ENCODE measurements at regions of chr1 and their contacts with region 1.

Region 1: DNA sequence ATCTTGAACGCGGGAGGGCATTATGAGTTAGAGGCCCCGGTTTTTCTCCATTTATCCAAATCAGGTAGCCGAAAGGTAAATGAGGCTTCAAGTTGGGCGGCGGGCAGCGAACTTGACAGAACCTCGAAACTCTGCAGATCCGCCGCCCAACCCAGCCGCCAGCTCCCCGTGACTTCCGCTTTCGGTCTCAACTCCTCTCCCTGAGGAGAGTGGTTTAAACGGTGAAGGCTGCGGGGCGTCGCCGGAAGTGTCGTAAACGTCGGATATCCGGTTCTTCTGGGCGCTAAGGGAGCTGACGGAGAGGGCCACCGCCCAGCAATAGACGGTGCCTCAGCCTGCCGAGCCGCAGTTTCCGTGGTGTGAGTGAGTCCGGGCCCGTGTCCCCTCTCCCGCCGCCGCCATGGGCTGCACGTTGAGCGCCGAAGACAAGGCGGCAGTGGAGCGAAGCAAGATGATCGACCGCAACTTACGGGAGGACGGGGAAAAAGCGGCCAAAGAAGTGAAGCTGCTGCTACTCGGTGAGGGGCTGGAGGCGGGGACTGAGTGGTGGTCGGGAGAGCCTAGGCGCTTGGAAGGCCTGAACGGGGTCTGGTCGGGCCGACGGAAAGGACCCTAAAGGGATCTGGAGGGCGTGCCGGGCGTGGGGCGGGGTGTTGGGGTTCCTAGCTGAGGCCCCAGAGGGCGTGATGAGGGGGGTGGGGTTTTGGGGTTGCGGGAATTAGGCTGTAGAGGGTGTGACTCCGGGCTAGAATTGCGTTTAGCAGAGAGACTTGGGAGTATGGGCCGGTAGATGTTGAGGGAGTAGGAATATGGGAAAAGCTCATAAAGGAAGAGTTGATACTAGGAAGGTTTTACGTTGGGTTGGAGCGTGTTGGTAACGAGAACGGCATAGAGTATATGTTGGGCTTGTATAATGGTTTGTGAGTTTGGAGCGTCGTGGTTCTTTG is at the start of gene GNAI3:
- DNase-seq: peak; percentile 90 to 97
- H3K4me3 ChIP-seq: peak within 1 kb of the TSS; percentile 93
- H3K27ac ChIP-seq: peak within 1 kb of the TSS; percentile 91
- H3K4me1 ChIP-seq: peaks cover 23% of the 10 kb centered on the region
- H3K27me3 ChIP-seq: no peaks in the 10 kb centered on the region
- CTCF ChIP-seq: peak; percentile 42; the same call in 1 of the 2 replicates
- total RNA-seq, gene GNAI3: 7.6 and 10.0 TPM in 2 replicates

Region 2: DNA sequence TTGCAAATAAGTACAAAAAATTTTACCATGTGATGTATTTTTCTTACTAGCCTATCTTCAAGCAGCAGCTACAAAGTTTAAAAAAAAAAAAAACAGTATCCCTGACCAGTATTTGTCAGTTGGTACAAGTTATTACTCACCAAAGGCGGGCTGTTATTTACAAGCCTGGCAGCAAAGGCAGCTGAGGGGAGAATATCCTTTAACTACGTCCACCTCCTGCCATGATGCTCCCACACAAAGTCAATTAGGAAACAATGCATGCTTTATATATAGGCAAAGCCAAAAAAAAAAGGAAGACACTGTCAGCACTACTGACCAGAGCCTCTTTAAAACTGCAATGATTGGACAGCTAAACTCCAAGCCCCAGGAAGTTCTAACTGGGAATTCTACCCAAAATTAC is 136.0 kb before region 1 on chr1:
- CTCF ChIA-PET with region 1: no interaction called
- POLR2A ChIA-PET with region 1: no interaction called
- intact Hi-C with region 1: no loop called
- DNase-seq: no peak
- H3K4me3 ChIP-seq: no peak overlapping the region
- H3K27ac ChIP-seq: no peak overlapping the region
- H3K4me1 ChIP-seq: no peaks in the 10 kb centered on the region
- H3K27me3 ChIP-seq: no peaks in the 10 kb centered on the region
- CTCF ChIP-seq: no peak

Region 3: GRCh38 chr1:109570417-109570827 is 21.8 kb after region 1 on chr1:
- CTCF ChIA-PET with region 1: interaction called, 4 read pairs
- POLR2A ChIA-PET with region 1: interaction called, 4 read pairs
- intact Hi-C with region 1: loop called (anchors 2 kb)
- DNase-seq: peak; percentile 45 to 99
- H3K4me3 ChIP-seq: peak overlapping the region; percentile 27; the same call in 1 of the 2 replicates
- H3K27ac ChIP-seq: peak overlapping the region; percentile 74
- H3K4me1 ChIP-seq: peaks cover 45% of the 10 kb centered on the region
- H3K27me3 ChIP-seq: no peaks in the 10 kb centered on the region
- CTCF ChIP-seq: no peak

Region 4: GRCh38 chr1:109630081-109630897 is 81.7 kb after region 1 on chr1:
- CTCF ChIA-PET with region 1: interaction called, 10 read pairs
- POLR2A ChIA-PET with region 1: interaction called, 6 read pairs
- intact Hi-C with region 1: no loop called
- DNase-seq: peak in 1 of 2 experiments; percentile 30
- H3K4me3 ChIP-seq: no peak overlapping the region
- H3K27ac ChIP-seq: no peak overlapping the region
- H3K4me1 ChIP-seq: no peaks in the 10 kb centered on the region
- H3K27me3 ChIP-seq: no peaks in the 10 kb centered on the region
- CTCF ChIP-seq: peak; percentile 43

Region 5: GRCh38 chr1:109643385-109644230 is 95.0 kb after region 1 on chr1:
- CTCF ChIA-PET with region 1: interaction called, 22 read pairs
- POLR2A ChIA-PET with region 1: no interaction called
- intact Hi-C with region 1: loop called (anchors 2 kb)
- DNase-seq: peak; percentile 78 to 85
- H3K4me3 ChIP-seq: peak overlapping the region; percentile 38; the same call in 1 of the 2 replicates
- H3K27ac ChIP-seq: no peak overlapping the region
- H3K4me1 ChIP-seq: peaks cover 10% of the 10 kb centered on the region
- H3K27me3 ChIP-seq: no peaks in the 10 kb centered on the region
- CTCF ChIP-seq: peak; percentile 96

Region 6: DNA sequence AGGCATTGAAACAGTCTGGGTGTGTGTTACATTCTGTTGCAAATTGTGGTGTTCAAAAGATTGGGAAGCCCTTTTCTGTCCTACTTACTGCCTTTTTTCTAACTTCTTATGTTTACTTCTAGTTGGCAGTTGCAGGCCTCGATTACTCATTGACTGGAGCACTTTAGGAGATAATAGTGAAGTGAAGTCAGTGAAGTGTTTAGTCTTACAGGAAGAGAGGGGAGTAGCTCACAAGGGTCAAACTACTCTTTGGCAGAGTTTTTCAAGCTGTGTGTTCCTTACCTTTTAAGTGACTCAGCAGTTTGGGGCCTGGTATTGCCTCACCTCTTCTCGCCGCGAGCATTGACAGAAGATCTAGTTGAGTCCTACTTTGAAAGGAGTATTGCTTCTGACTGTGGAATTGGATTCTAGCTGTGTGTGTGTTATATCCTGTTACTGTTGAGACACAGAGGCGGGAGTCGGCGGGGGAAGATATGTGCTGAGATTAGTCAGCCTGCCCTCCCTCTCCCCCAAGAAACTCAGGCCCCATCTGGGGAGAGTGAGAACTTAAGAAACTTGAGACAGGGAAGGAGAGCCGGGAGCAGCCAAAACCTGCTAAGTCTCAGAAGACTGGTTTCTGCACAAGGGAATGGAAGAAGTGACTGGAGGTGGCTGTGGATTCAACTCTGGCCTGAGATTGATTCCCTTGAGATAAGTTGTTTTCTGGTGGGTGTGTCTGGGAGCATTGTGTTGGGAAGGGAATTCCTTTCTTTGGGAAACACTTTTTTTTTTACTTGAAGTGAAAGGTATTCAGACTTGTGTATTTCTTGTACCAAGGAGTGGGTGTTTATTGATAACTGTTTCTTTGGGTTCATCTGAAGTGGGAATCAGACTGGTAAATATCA is 455.4 kb after region 1 on chr1:
- CTCF ChIA-PET with region 1: no interaction called
- POLR2A ChIA-PET with region 1: no interaction called
- intact Hi-C with region 1: loop called (anchors 5 kb)
- DNase-seq: peak; percentile 82 to 100
- H3K4me3 ChIP-seq: peak overlapping the region; percentile 60
- H3K27ac ChIP-seq: peak overlapping the region; percentile 95
- H3K4me1 ChIP-seq: peaks cover 76% of the 10 kb centered on the region
- H3K27me3 ChIP-seq: no peaks in the 10 kb centered on the region
- CTCF ChIP-seq: no peak

Region 7: GRCh38 chr1:110155878-110156522 is 607.4 kb after region 1 on chr1:
- CTCF ChIA-PET with region 1: no interaction called
- POLR2A ChIA-PET with region 1: no interaction called
- intact Hi-C with region 1: no loop called
- DNase-seq: peak in 1 of 2 experiments; percentile 38
- H3K4me3 ChIP-seq: no peak overlapping the region
- H3K27ac ChIP-seq: no peak overlapping the region
- H3K4me1 ChIP-seq: peaks cover 9% of the 10 kb centered on the region
- H3K27me3 ChIP-seq: peaks cover 4% of the 10 kb centered on the region; the same call in 1 of the 2 replicates
- CTCF ChIP-seq: no peak